ENCODE measurements at regions of chr2 and their contacts with region 1.

Region 1: GRCh38 chr2:131492418-131493198 is 411 bp upstream of the MZT2A start:
- DNase-seq: peak; percentile 93
- H3K4me3 Mint-ChIP-seq: peak overlapping the region; percentile 91
- H3K27ac Mint-ChIP-seq: peak overlapping the region; percentile 98
- H3K4me1 Mint-ChIP-seq: peaks cover 47% of the 10 kb centered on the region
- H3K27me3 Mint-ChIP-seq: no peaks in the 10 kb centered on the region

Region 2: DNA sequence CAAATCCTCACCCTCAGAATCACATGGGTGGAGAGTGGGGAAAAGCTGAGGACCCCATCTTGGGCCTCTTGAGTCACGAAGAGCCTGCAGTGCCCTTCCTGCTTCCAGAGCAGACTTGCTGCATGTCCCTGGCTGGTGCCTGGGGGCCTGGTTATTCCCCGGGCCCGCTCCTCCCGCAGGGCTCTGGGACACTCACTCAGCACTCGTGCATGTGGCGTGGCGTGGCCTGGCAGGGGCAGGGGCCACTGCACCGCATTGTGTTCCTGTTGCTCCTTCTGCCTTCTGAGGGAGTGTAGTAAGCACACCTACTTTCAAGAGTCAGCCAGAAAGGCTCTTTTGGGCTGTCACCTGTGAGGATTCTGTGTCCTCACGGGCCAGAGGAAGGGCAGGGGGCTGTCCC is 17.0 kb after region 1 on chr2:
- CTCF ChIA-PET with region 1: interaction called, 10 read pairs
- POLR2A ChIA-PET with region 1: interaction called, 6 read pairs
- DNase-seq: no peak
- H3K4me3 Mint-ChIP-seq: no peak overlapping the region
- H3K27ac Mint-ChIP-seq: no peak overlapping the region
- H3K4me1 Mint-ChIP-seq: peaks cover 19% of the 10 kb centered on the region
- H3K27me3 Mint-ChIP-seq: no peaks in the 10 kb centered on the region

Region 3: DNA sequence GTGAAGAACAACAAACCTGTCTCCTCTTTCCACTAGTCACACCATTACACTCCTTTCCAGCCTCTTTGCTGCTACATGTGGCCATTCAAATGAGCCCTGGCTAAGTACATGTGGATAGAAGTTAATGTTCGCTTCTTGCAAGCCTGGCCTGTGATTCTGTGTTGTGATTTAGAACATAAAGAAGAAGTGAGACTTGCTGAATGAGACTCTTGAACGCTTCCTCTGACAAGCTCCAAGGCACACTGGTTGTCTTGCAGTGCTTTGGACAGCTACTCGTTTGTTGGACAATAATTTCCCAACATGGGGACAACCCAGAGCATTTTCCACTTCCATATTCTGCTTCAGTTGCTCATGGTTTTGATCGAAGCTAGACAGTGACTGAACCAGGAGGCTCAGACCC is 92.3 kb after region 1 on chr2:
- CTCF ChIA-PET with region 1: no interaction called
- POLR2A ChIA-PET with region 1: no interaction called
- DNase-seq: no peak
- H3K4me3 Mint-ChIP-seq: no peak overlapping the region
- H3K27ac Mint-ChIP-seq: no peak overlapping the region
- H3K4me1 Mint-ChIP-seq: no peaks in the 10 kb centered on the region
- H3K27me3 Mint-ChIP-seq: peaks cover 21% of the 10 kb centered on the region

Region 4: DNA sequence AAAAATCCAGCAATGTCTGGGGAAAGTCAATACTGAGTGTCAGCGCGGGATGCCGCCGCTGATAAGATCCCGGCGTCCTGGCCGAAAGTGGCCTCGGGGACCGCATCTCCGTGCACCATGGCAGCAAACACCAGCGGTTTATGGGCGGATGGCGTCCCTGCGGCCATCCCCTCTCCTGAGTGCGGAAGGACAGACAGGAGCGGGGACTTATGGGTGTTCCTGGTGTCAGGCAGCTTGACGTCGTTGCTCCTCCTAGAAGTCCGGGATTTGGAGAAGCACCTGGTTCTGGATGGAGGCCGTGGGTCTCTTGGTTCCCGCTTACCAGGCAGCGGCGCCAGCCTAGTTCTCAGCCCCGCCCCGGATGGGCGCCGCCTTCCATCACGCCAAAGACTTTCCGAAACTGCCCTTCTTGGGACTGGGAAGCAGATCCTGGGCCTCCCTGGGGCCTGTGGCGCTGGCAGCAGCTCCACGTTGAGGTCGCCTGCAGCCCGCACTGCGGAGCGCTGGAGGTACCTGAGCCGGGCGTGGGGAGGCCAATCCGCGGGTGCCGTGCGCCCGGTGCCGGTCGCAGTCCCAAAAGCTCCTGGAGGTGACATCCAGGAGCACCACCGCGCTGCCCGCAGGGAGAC is 154.2 kb after region 1 on chr2:
- CTCF ChIA-PET with region 1: no interaction called
- POLR2A ChIA-PET with region 1: no interaction called
- DNase-seq: no peak
- H3K4me3 Mint-ChIP-seq: no peak overlapping the region
- H3K27ac Mint-ChIP-seq: no peak overlapping the region
- H3K4me1 Mint-ChIP-seq: no peaks in the 10 kb centered on the region
- H3K27me3 Mint-ChIP-seq: peaks cover 51% of the 10 kb centered on the region

Measured in activated CD4-positive, alpha-beta T cell treated with anti-CD3 and anti-CD28 coated beads, Interleukin-2, amount 10 ng/mL, durations not matched to agents 7 days and 5 days (primary cell).